Activated T-helper 2 cell treated with anti-CD3 and anti-CD28 coated beads, Interferon-gamma antibody, Interleukin-2, Interleukin-4, amounts not matched to agents 10 μg/mL and 5 μg/mL and 100 μg/mL, durations not matched to agents 14 hours and 24 hours and 36 hours (primary cell): ENCODE measurements at regions of chr3 and their contacts with region 1.

Region 1: GRCh38 chr3:13452490-13453335 is 27.4 kb upstream of the HDAC11 start:
- DNase-seq: peak; percentile 26
- H3K4me3 Mint-ChIP-seq: peak overlapping the region; percentile 86
- H3K27ac Mint-ChIP-seq: peak overlapping the region; percentile 11
- H3K4me1 Mint-ChIP-seq: peaks cover 11% of the 10 kb centered on the region
- H3K27me3 Mint-ChIP-seq: no peaks in the 10 kb centered on the region

Region 2: DNA sequence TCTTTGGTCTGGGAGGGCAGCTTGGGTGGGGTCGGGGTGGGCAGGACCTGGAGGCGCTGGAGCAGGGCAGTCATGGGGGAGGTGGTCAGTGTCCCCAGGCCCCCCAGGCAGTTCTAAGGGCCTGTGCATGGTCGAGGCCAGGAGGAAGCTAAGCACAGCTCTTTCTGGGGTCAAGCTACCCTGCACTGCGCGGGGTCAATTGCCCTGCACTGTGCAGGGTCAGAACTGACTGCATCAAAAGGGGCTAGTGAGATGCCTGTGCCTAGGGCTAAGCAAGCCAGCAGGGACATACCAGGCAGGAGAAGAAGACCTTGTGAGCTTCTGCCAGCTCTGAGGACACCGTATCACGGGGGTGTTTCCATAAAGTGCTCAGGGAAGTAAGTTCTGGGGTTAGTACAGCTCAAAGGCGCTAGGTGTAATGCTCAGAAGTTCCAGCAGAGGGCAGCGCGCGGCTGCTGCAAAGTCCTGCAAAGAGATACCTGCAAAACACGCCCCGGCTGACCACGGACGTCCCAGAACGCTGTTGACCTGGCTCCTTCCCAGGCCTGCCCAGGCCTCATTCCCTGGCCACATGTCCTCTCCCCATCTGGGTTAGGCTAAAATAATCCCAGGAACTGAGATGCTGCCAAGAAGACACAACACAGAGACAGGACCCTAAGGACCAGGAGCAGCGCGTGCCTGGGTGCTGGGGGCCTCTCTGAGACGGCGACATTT is 360.7 kb before region 1 on chr3:
- intact Hi-C with region 1: loop called (anchors 1 kb)
- DNase-seq: peak; percentile 67
- H3K4me3 Mint-ChIP-seq: no peak overlapping the region
- H3K27ac Mint-ChIP-seq: no peak overlapping the region
- H3K4me1 Mint-ChIP-seq: peaks cover 2% of the 10 kb centered on the region
- H3K27me3 Mint-ChIP-seq: peaks cover 14% of the 10 kb centered on the region

Region 3: DNA sequence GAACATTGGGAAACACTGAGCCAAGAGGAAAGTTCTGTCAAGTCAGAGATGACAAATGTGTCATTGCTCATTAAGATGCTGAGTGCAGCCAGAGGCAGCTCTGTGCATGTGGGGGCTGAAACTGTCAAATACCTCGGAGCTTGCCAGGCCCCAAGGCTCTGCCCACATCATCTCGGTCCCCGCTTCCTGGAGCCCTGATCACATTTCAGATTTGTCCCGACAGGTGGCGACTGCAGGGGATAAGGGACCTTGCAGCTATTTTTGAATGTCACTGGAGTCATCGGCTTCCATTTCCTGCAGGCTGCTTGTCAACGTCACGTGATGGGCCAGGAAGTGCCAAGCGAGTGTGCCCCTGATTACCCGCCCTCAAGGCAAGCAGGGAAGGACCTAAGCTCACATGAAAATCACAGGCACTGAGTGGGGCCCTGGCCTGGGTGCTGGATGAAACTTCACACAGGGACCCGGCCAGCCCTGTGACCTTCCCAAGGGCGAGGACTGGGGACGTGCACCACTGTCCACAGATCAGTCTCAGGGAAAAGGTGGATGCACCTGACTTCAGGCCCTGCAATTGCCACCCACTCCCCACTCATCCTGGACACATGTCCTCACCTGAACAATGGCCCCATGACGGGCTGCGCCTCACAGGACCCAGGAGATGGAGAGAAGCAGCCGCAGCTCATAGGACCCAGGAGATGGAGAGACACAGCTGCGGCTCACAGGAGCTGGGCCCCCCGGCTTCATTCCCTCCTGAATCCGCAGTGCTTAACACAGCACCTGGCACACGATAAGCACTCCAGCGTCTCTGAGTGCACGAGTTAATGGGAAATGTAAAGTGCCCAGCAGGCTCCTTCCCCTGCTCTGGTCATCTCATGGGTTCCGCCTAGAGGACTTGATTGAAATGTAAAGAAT is 106.0 kb before region 1 on chr3:
- intact Hi-C with region 1: loop called (anchors 1 kb)
- DNase-seq: peak; percentile 65
- H3K4me3 Mint-ChIP-seq: no peak overlapping the region
- H3K27ac Mint-ChIP-seq: peak overlapping the region; percentile 60
- H3K4me1 Mint-ChIP-seq: peaks cover 33% of the 10 kb centered on the region
- H3K27me3 Mint-ChIP-seq: no peaks in the 10 kb centered on the region

Region 4: DNA sequence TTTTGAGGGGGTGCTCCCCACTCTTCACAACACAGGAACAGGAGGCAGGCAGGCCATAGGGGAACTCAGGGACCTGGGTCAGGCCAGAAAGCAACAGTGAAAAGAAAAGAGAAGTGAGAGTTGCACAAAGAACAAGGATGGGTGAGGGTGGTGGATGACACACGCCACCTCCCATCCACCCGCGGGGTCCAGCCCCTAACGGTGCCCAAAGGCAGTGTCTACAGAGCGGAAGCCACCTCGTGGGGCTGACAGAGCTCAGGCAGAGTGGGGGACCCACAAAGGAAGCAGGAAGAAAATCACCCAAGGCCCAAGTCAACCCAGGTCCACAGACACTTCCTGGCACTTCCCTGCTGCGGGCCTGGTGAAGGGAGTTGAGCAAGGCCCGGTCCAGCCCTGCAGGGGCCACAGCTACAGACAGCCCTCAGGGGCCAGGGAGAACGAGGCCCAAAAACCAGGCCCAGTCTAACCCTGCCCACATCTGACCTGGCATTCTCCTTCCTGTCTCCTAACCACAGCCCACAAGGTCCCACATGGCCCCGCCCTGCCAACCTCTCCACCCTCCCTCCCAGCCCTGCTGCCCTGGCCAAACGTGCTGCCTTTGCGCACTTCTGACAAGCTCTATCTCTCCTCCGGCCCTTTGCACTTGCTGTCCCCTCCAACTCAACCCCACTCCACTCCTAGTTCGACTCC is 38.5 kb before region 1 on chr3:
- intact Hi-C with region 1: loop called (anchors 1 kb)
- DNase-seq: peak; percentile 65
- H3K4me3 Mint-ChIP-seq: peak overlapping the region; percentile 83
- H3K27ac Mint-ChIP-seq: peak overlapping the region; percentile 93
- H3K4me1 Mint-ChIP-seq: peaks cover 52% of the 10 kb centered on the region
- H3K27me3 Mint-ChIP-seq: no peaks in the 10 kb centered on the region

Region 5: GRCh38 chr3:13419505-13420044 is 33.1 kb before region 1 on chr3:
- intact Hi-C with region 1: loop called (anchors 1 kb)
- DNase-seq: peak; percentile 54
- H3K4me3 Mint-ChIP-seq: peak overlapping the region; percentile 86
- H3K27ac Mint-ChIP-seq: peak overlapping the region; percentile 89
- H3K4me1 Mint-ChIP-seq: peaks cover 64% of the 10 kb centered on the region
- H3K27me3 Mint-ChIP-seq: no peaks in the 10 kb centered on the region

Region 6: DNA sequence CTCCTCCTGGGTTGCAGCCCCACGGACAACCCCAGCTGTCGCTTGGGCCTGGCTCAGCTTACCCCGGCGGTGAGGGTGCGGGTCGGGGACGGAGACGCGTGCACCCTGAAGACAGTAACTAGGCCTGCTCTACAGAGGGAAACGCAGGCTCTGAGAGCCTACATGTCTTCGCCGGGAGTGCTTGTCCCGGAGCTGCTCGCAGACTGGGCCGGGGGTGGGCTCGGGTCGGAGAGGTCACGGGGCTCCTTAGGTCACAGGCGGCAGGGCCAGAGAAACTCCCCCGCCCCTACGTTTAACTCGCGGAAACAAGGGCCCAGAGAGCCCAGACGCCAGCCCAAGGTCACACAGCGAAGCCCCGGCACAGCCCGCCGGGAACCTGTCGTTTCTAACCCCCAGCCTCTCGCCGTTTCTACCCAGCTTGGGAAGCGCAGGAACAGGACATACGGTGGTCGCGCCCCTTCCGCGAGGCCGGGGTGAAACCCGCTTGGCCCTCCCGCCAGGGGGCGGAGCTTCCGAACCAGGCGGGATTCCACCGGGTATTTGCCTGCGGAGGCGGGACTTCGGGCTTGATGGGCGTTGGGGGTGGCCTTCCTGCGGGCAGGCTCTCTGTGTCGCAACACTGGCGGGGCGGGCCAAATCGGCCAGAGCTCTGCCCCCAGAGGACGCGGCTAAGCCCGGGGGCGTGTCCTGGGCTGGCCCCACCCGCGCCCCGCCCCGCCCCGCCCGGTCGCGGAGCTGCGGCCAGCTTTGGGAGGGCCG is 27.0 kb after region 1 on chr3 and contains the start of gene HDAC11:
- intact Hi-C with region 1: loop called (anchors 1 kb)
- DNase-seq: peak; percentile 97
- H3K4me3 Mint-ChIP-seq: peak within 1 kb of the TSS; percentile 86
- H3K27ac Mint-ChIP-seq: peak within 1 kb of the TSS; percentile 79
- H3K4me1 Mint-ChIP-seq: peaks cover 2% of the 10 kb centered on the region
- H3K27me3 Mint-ChIP-seq: peaks cover 3% of the 10 kb centered on the region
- total RNA-seq, gene HDAC11: 1.7 and 2.6 TPM in 2 replicates